Heart right ventricle (tissue), 16 donors: ENCODE measurements at regions of chr14 and their contacts with region 1.

Region 1: GRCh38 chr14:77076113-77076631 is 21.9 kb upstream of the CIPC start:
- DNase-seq: peak; percentile 81 to 89
- ATAC-seq: peak; percentile 90 to 96 (median 93)
- H3K4me3 ChIP-seq: peak overlapping the region in 8 of 10 donors; percentile 24 to 42 (median 30)
- H3K27ac ChIP-seq: peak overlapping the region; percentile 79 to 95 (median 92)
- H3K4me1 ChIP-seq: peaks cover 9 to 41% (median 28%) of the 10 kb centered on the region in 9 donors
- H3K27me3 ChIP-seq: no peaks in the 10 kb centered on the region
- CTCF ChIP-seq: no peak

Region 2: GRCh38 chr14:76701981-76702380 is 374.2 kb before region 1 on chr14:
- intact Hi-C with region 1: loop called in 1 of 10 experiments (anchors 10 kb)
- DNase-seq: peak; percentile 38 to 49
- ATAC-seq: peak in 7 of 8 donors; percentile 57 to 87 (median 68)
- H3K4me3 ChIP-seq: no peak overlapping the region
- H3K27ac ChIP-seq: no peak overlapping the region
- H3K4me1 ChIP-seq: peaks cover 0 to 10% (median 4%) of the 10 kb centered on the region in 9 donors
- H3K27me3 ChIP-seq: peaks cover 0 to 4% (median 0%) of the 10 kb centered on the region in 7 donors
- CTCF ChIP-seq: no peak

Region 3: DNA sequence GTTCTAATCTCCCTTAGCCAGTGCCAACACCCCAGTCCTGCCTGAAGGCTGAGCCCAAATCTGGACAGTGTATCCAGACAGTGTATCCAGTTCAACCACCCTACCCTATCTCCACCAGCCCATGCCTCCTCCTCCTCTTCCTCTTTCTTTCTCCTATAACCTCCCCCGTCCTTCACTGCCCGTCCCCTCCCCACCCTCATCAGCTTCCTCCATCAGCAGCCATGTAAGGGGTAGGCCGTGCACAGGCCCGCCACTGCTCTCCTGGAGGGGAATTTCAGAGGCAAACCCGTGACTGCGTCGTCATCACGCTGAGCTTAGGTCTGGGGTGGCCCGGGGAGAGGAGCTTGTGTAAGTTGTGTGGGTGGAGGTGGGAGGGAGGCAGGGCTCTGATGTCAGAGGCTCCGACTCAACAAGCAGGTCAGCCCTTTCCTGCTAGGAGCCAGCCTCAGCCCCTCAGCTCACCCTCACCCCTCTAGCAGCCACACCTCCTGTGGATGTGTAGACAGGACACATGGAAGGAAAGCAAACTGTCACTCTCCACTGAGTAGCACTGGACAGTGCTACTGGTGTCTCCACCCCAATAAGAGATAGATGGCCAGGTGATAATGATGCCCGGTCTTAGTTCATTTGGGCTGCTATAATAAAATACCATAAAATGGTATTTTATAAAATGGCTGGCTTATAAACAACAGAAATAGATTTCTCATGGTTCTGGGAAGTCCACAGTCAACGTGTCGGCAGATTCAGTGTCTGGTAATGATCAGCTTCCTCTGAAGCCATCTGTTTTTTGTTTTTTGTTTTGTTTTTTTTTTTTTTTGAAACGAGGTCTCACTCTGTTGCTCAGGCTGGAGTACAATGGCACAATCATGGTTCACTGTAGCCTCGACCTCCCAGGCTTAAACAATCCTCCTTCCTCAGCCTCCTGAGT is 98.1 kb before region 1 on chr14:
- intact Hi-C with region 1: no loop called
- DNase-seq: peak; percentile 41 to 66
- ATAC-seq: peak; percentile 48 to 85 (median 82)
- H3K4me3 ChIP-seq: no peak overlapping the region
- H3K27ac ChIP-seq: peak overlapping the region in 4 of 10 donors; percentile 19 to 79 (median 49)
- H3K4me1 ChIP-seq: peaks cover 0 to 25% (median 4%) of the 10 kb centered on the region in 9 donors
- H3K27me3 ChIP-seq: no peaks in the 10 kb centered on the region
- CTCF ChIP-seq: no peak

Region 4: GRCh38 chr14:77097700-77098528 is 21.7 kb after region 1 on chr14 and contains the start of gene CIPC:
- intact Hi-C with region 1: loop called in 1 of 10 experiments (anchors 2 kb)
- DNase-seq: peak; percentile 99 to 100
- ATAC-seq: peak; percentile 94 to 98 (median 96)
- H3K4me3 ChIP-seq: peak within 1 kb of the TSS; percentile 53 to 86 (median 73)
- H3K27ac ChIP-seq: peak within 1 kb of the TSS; percentile 94 to 99 (median 98)
- H3K4me1 ChIP-seq: peaks cover 0 to 62% (median 49%) of the 10 kb centered on the region in 9 donors
- H3K27me3 ChIP-seq: no peaks in the 10 kb centered on the region
- CTCF ChIP-seq: no peak
- total RNA-seq, gene CIPC: 51.4 to 93.8 (median 64.2) TPM